Ascending aorta (tissue), 2 donors: ENCODE measurements at regions of chr2 and their contacts with region 1.

Region 1: GRCh38 chr2:8681786-8682692 is at the start of gene ID2:
- DNase-seq: peak; percentile 99 to 100
- H3K4me3 ChIP-seq: peak within 1 kb of the TSS; percentile 82 to 89
- H3K27ac ChIP-seq: peak within 1 kb of the TSS; percentile 99 to 100
- H3K4me1 ChIP-seq: peaks cover 0 to 10% of the 10 kb centered on the region in 2 donors
- H3K27me3 ChIP-seq: no peaks in the 10 kb centered on the region
- CTCF ChIP-seq: no peak
- total RNA-seq, gene ID2: 752 TPM

Region 2: DNA sequence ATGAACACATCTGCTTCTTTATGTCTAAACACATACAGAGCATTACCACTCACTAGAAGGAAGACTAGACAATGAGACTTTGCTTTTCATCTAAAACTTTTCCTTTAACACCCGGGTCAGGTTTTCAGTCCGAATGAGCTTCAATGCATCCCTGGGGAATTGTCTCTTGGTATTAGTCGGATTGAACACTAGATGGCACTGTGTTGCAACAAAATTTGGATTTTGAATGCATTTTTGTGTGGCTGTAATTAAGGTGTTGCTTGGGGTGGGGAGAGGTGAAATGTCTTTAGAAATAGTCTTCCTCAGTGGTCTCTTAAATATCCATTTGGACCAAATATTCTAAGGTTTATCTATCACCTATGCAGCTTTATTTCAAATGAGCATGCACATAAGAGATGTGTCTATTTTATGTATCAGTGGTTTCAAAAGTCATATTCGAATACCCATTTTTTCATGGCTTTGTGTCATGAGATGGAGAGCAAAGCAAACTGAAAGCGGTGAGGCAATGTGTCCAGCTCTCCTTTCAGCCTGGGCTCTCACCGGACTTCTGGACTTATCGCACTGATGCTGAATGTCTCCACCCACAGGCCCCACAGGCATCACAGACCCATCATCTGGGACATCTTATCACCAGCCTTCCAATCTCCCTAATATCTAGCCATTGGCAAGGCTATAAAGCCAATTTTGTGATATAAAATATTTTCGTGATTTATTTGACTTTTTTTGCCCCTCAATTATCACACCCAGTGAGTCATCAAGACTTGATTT is 1254.6 kb before region 1 on chr2:
- intact Hi-C with region 1: loop called (anchors 1 kb)
- DNase-seq: no peak
- H3K4me3 ChIP-seq: no peak overlapping the region
- H3K27ac ChIP-seq: no peak overlapping the region
- H3K4me1 ChIP-seq: peaks cover 0 to 2% of the 10 kb centered on the region in 2 donors
- H3K27me3 ChIP-seq: no peaks in the 10 kb centered on the region
- CTCF ChIP-seq: peak; percentile 55 to 80 (median 61)

Region 3: GRCh38 chr2:8004250-8004681 is 677.8 kb before region 1 on chr2:
- intact Hi-C with region 1: loop called (anchors 5 kb)
- DNase-seq: peak in 1 of 2 donors; percentile 77
- H3K4me3 ChIP-seq: peak overlapping the region; percentile 32 to 48
- H3K27ac ChIP-seq: peak overlapping the region; percentile 77 to 88
- H3K4me1 ChIP-seq: peaks cover 3 to 4% of the 10 kb centered on the region in 2 donors
- H3K27me3 ChIP-seq: no peaks in the 10 kb centered on the region
- CTCF ChIP-seq: no peak

Region 4: GRCh38 chr2:8215159-8215863 is 466.7 kb before region 1 on chr2:
- intact Hi-C with region 1: loop called (anchors 2 kb)
- DNase-seq: no peak
- H3K4me3 ChIP-seq: no peak overlapping the region
- H3K27ac ChIP-seq: no peak overlapping the region
- H3K4me1 ChIP-seq: peaks cover 1 to 4% of the 10 kb centered on the region in 2 donors
- H3K27me3 ChIP-seq: no peaks in the 10 kb centered on the region
- CTCF ChIP-seq: no peak

Region 5: DNA sequence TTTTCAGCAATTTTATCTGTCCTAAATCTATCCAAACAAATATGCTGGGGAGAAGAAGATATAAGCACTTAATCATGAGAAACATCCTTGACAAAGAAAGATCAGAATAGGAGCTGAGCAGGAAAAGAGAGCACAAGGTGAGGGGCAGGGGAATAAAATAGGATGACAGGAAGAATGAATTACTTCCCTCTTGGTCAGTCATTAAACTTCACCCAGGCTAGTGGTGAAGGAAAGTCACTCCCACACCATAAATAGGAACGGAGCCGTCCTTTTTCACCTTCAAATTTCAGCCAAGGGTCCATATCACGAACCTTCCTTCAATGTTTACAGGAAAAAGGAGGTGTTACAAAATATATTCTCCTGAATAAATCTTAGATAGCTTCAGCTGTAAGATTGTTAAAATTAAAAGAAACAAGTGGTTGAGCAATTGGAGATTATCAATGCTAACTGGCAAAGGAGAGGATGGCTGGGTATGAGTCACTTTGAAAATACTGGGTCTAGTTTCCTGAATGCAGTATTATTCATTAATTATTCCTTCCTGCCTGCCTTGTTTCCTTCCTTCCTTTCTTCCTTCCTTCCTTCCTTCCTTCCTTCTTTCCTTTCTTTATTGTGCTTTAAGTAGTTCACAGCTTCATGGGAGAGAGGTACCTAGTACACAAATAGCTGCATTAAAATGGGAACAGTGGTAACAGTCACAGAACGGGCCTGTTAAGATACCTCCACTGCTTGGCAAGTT is 292.5 kb before region 1 on chr2:
- intact Hi-C with region 1: no loop called
- DNase-seq: no peak
- H3K4me3 ChIP-seq: no peak overlapping the region
- H3K27ac ChIP-seq: no peak overlapping the region
- H3K4me1 ChIP-seq: no peaks in the 10 kb centered on the region
- H3K27me3 ChIP-seq: no peaks in the 10 kb centered on the region
- CTCF ChIP-seq: no peak

Region 6: GRCh38 chr2:8583400-8584173 is 98.5 kb before region 1 on chr2:
- intact Hi-C with region 1: loop called (anchors 5 kb)
- DNase-seq: peak; percentile 86 to 95
- H3K4me3 ChIP-seq: peak overlapping the region in 1 of 2 donors; percentile 32
- H3K27ac ChIP-seq: no peak overlapping the region
- H3K4me1 ChIP-seq: no peaks in the 10 kb centered on the region
- H3K27me3 ChIP-seq: no peaks in the 10 kb centered on the region
- CTCF ChIP-seq: no peak

Region 7: GRCh38 chr2:8719528-8719927 is 37.5 kb after region 1 on chr2:
- intact Hi-C with region 1: no loop called
- DNase-seq: no peak
- H3K4me3 ChIP-seq: no peak overlapping the region
- H3K27ac ChIP-seq: no peak overlapping the region
- H3K4me1 ChIP-seq: no peaks in the 10 kb centered on the region
- H3K27me3 ChIP-seq: no peaks in the 10 kb centered on the region
- CTCF ChIP-seq: no peak

Region 8: DNA sequence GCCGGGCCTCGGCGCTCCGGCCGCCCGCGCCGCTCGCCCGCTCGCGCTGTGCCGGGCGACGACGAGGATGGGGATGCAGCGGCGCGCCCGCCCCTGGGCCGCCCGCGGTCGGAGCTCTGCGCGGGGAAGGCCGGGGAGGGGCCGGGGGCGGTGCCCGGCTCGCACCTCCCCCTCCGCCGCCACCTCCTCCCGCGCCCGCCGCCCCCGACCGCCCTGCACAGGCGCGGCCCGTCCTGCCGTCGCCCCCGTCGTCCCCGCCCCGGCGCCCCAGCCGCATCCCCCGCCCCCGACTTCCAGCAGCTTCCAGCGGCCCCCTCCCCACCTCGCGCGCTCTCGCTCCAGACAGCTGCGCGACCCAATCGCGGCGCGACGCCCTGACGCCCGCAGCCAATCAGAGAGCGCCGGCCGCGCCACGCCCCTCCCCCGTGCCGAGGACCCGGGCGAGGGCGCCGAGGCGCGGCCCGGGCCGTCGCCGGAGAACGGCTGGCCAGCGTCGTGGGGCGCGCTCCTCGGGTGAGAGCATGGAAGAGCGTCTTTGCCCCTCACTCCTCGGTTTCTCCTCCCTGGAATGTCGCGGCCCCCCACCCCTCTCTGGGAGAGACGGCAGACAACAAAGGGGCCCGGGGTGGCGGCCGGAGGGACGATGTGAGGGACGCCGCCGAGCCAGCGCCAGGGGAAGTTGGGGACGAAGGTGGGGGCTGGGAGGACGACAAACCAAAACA is 321.7 kb after region 1 on chr2 and contains the start of gene MBOAT2:
- intact Hi-C with region 1: loop called (anchors 10 kb)
- DNase-seq: peak; percentile 14 to 88
- H3K4me3 ChIP-seq: peak within 1 kb of the TSS; percentile 80 to 97
- H3K27ac ChIP-seq: peak within 1 kb of the TSS; percentile 85 to 93
- H3K4me1 ChIP-seq: peaks cover 0 to 9% of the 10 kb centered on the region in 2 donors
- H3K27me3 ChIP-seq: no peaks in the 10 kb centered on the region
- CTCF ChIP-seq: no peak
- total RNA-seq, gene MBOAT2: 8.0 TPM